ENCODE measurements at regions of chr11 and their contacts with region 1.

Region 1: GRCh38 chr11:59171508-59172322 is at the start of gene DTX4:
- DNase-seq: peak; percentile 93 to 94
- H3K4me3 ChIP-seq: peak within 1 kb of the TSS; percentile 65 to 86
- H3K27ac ChIP-seq: peak within 1 kb of the TSS; percentile 77 to 89
- H3K4me1 ChIP-seq: peaks cover 0 to 10% of the 10 kb centered on the region in 2 donors
- H3K27me3 ChIP-seq: no peaks in the 10 kb centered on the region
- CTCF ChIP-seq: peak; percentile 83 to 96 (median 91)
- POLR2A ChIP-seq: no peak
- total RNA-seq, gene DTX4: 3.2 to 17.8 (median 9.2) TPM

Region 2: GRCh38 chr11:59106363-59107336 is 65.1 kb before region 1 on chr11 and contains the start of gene FAM111B:
- intact Hi-C with region 1: no loop called
- DNase-seq: peak; percentile 83 to 89
- H3K4me3 ChIP-seq: peak within 1 kb of the TSS; percentile 37 to 47
- H3K27ac ChIP-seq: peak within 1 kb of the TSS; percentile 29 to 76
- H3K4me1 ChIP-seq: peaks cover 0 to 4% of the 10 kb centered on the region in 2 donors
- H3K27me3 ChIP-seq: peaks cover 0 to 4% of the 10 kb centered on the region in 2 donors
- CTCF ChIP-seq: peak in 1 of 4 experiments; percentile 19
- POLR2A ChIP-seq: no peak
- total RNA-seq, gene FAM111B: 18.5 TPM in 1 of 4 donors, not detected in the others

Region 3: DNA sequence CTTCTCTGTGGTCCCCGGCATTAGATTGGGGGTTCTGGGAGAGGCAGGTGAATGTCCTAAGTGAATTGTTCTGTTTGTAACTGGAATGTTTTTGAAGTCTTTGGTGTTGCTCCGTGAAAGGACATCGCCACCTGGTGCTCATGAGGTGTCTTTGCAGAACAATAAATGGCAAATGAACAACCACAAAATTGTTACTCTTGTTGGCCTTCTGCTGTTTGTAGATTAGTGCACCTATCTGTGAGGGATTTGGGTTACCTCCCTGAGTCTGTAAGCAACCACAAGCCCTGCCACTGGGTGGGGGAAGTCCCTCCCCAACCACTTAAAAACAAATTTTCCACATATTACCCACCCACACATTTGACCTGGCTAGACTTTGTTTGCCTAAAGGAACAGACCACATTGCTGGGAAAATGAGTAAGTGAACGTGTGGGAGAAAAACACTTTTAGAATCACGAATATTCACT is 36.3 kb after region 1 on chr11:
- intact Hi-C with region 1: loop called (anchors 5 kb)
- DNase-seq: peak in 1 of 2 donors; percentile 56
- H3K4me3 ChIP-seq: no peak overlapping the region
- H3K27ac ChIP-seq: peak overlapping the region; percentile 22 to 57
- H3K4me1 ChIP-seq: no peaks in the 10 kb centered on the region
- H3K27me3 ChIP-seq: no peaks in the 10 kb centered on the region
- CTCF ChIP-seq: peak; percentile 61 to 84 (median 76)
- POLR2A ChIP-seq: no peak

Region 4: DNA sequence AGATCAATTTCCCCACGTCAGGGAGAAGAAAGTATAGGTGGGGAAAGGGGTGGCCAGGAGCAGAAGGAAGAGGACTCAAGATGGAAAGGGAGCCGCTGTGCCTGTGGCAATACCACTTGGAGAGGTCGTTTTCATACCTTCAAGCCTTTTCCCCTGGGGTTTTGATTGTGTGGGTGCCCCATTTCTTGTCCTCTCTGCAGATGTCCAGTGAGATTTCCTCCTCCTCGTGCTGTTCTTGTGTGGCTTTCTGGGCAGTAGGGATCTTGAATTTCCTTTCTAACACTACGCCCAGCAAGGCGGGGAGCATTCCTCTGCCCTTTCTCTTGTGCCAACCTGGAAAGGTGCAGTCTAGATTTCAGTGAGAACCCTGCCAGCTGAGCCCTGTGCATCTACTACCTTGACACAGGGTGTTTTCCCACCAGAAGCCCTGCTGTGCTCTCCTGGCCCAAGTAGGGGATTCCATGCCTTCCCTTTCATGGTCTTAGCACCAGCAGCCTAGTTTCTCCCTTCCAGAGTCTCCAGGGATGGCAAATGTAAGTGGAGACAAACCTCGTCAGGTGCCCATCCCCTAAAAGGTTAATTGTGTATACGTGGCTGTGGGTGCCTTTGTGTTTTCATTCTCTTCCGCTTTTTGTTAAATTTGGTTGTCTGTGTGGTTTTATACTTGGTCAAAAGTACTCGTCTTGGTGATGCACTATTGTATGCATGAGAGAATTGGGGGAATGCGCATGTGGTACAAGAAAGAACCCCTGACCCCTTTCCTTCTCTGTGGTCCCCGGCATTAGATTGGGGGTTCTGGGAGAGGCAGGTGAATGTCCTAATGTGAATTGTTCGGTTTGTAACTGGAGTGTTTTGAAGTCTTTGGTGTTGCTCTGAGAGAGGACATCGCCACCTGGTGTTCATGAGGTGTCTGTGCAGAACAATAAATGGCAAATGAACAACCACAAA is 112.4 kb after region 1 on chr11:
- intact Hi-C with region 1: loop called (anchors 10 kb)
- DNase-seq: peak in 1 of 2 donors; percentile 38
- H3K4me3 ChIP-seq: no peak overlapping the region
- H3K27ac ChIP-seq: no peak overlapping the region
- H3K4me1 ChIP-seq: no peaks in the 10 kb centered on the region
- H3K27me3 ChIP-seq: no peaks in the 10 kb centered on the region
- CTCF ChIP-seq: peak; percentile 55 to 75 (median 69)
- POLR2A ChIP-seq: no peak

Region 5: GRCh38 chr11:59417023-59417422 is 245.3 kb after region 1 on chr11:
- intact Hi-C with region 1: no loop called
- DNase-seq: no peak
- H3K4me3 ChIP-seq: no peak overlapping the region
- H3K27ac ChIP-seq: no peak overlapping the region
- H3K4me1 ChIP-seq: no peaks in the 10 kb centered on the region
- H3K27me3 ChIP-seq: no peaks in the 10 kb centered on the region
- CTCF ChIP-seq: no peak
- POLR2A ChIP-seq: no peak